ENCODE measurements at regions of chr20 and their contacts with region 1.

Region 1: GRCh38 chr20:53915446-53916172 is 154.8 kb downstream of the BCAS1 start:
- DNase-seq: peak; percentile 84
- ATAC-seq: peak; percentile 92
- H3K4me3 ChIP-seq: peak overlapping the region; percentile 73 to 88 (median 80)
- H3K27ac ChIP-seq: peak overlapping the region; percentile 17
- H3K4me1 ChIP-seq: peaks cover 48% of the 10 kb centered on the region
- H3K27me3 ChIP-seq: peaks cover 0 to 2% of the 10 kb centered on the region in 2 experiments; a peak in 1 of 5 replicates
- CTCF ChIP-seq: peak; percentile 96
- EP300 ChIP-seq: no peak; a peak in 1 of 4 replicates
- POLR2A ChIP-seq: no peak
- RAD21 ChIP-seq: peak; percentile 83

Region 2: DNA sequence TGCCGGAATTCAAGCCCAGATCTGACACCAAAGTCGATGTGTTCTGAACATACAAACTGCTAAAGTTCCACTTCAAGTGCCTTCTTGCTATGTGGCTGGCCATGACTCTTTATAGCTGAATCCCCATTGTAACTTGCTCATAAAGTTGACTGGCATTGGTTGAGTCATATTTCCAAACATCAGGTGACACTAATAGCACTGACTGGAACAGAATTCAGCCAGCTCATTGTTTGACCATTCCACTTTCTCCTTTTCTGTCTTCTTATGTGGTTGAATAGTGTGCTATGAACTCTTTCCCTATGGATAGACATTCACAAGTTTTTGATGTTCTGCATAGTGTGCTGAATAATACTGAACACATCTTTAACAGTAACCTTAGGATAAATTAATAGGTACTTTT is 1457.8 kb before region 1 on chr20:
- CTCF ChIA-PET with region 1: no interaction called
- POLR2A ChIA-PET with region 1: no interaction called
- in situ Hi-C with region 1: no loop called
- intact Hi-C with region 1: no loop called
- DNase-seq: no peak
- ATAC-seq: no peak
- H3K4me3 ChIP-seq: no peak overlapping the region
- H3K27ac ChIP-seq: no peak overlapping the region
- H3K4me1 ChIP-seq: no peaks in the 10 kb centered on the region
- H3K27me3 ChIP-seq: no peaks in the 10 kb centered on the region
- CTCF ChIP-seq: no peak
- EP300 ChIP-seq: no peak
- POLR2A ChIP-seq: no peak
- RAD21 ChIP-seq: no peak

Region 3: GRCh38 chr20:53594068-53595017 is 321.3 kb before region 1 on chr20:
- CTCF ChIA-PET with region 1: no interaction called
- POLR2A ChIA-PET with region 1: interaction called, 13 read pairs
- in situ Hi-C with region 1: no loop called
- intact Hi-C with region 1: no loop called
- DNase-seq: peak; percentile 89
- ATAC-seq: peak; percentile 88
- H3K4me3 ChIP-seq: peak overlapping the region; percentile 89 to 98 (median 90)
- H3K27ac ChIP-seq: peak overlapping the region; percentile 87
- H3K4me1 ChIP-seq: peaks cover 43% of the 10 kb centered on the region
- H3K27me3 ChIP-seq: no peaks in the 10 kb centered on the region; a peak in 1 of 5 replicates
- CTCF ChIP-seq: peak; percentile 88
- EP300 ChIP-seq: peak in 1 of 2 experiments; percentile 14; a peak in 1 of 4 replicates
- POLR2A ChIP-seq: peak; percentile 52 to 60
- RAD21 ChIP-seq: peak; percentile 91

Region 4: GRCh38 chr20:53660078-53660909 is 255.3 kb before region 1 on chr20:
- CTCF ChIA-PET with region 1: no interaction called
- POLR2A ChIA-PET with region 1: interaction called, 5 read pairs
- in situ Hi-C with region 1: no loop called
- intact Hi-C with region 1: loop called (anchors 5 kb)
- DNase-seq: no peak
- ATAC-seq: no peak
- H3K4me3 ChIP-seq: peak overlapping the region in 2 of 3 experiments; percentile 6 to 7; a peak in 2 of 6 replicates
- H3K27ac ChIP-seq: peak overlapping the region; percentile 9
- H3K4me1 ChIP-seq: peaks cover 55% of the 10 kb centered on the region
- H3K27me3 ChIP-seq: no peaks in the 10 kb centered on the region
- CTCF ChIP-seq: no peak
- EP300 ChIP-seq: no peak
- POLR2A ChIP-seq: no peak
- RAD21 ChIP-seq: no peak

Region 5: GRCh38 chr20:53711394-53712211 is 204.0 kb before region 1 on chr20:
- CTCF ChIA-PET with region 1: no interaction called
- POLR2A ChIA-PET with region 1: no interaction called
- in situ Hi-C with region 1: no loop called
- intact Hi-C with region 1: loop called (anchors 5 kb)
- DNase-seq: peak; percentile 69
- ATAC-seq: peak; percentile 76
- H3K4me3 ChIP-seq: peak overlapping the region; percentile 35 to 49 (median 42); a peak in 5 of 6 replicates
- H3K27ac ChIP-seq: peak overlapping the region; percentile 30
- H3K4me1 ChIP-seq: peaks cover 58% of the 10 kb centered on the region
- H3K27me3 ChIP-seq: no peaks in the 10 kb centered on the region
- CTCF ChIP-seq: no peak
- EP300 ChIP-seq: peak in 1 of 2 experiments; percentile 66; a peak in 3 of 4 replicates
- POLR2A ChIP-seq: peak in 1 of 2 experiments; percentile 58; a peak in 1 of 4 replicates
- RAD21 ChIP-seq: no peak

Region 6: GRCh38 chr20:53786445-53787267 is 129.0 kb before region 1 on chr20:
- CTCF ChIA-PET with region 1: no interaction called
- POLR2A ChIA-PET with region 1: no interaction called
- in situ Hi-C with region 1: no loop called
- intact Hi-C with region 1: loop called (anchors 5 kb)
- DNase-seq: peak; percentile 56
- ATAC-seq: peak; percentile 77
- H3K4me3 ChIP-seq: peak overlapping the region; percentile 26 to 52 (median 27)
- H3K27ac ChIP-seq: peak overlapping the region; percentile 72
- H3K4me1 ChIP-seq: peaks cover 65% of the 10 kb centered on the region
- H3K27me3 ChIP-seq: no peaks in the 10 kb centered on the region
- CTCF ChIP-seq: peak; percentile 46
- EP300 ChIP-seq: peak in 1 of 2 experiments; percentile 82; a peak in 2 of 4 replicates
- POLR2A ChIP-seq: no peak
- RAD21 ChIP-seq: peak; percentile 40

Region 7: DNA sequence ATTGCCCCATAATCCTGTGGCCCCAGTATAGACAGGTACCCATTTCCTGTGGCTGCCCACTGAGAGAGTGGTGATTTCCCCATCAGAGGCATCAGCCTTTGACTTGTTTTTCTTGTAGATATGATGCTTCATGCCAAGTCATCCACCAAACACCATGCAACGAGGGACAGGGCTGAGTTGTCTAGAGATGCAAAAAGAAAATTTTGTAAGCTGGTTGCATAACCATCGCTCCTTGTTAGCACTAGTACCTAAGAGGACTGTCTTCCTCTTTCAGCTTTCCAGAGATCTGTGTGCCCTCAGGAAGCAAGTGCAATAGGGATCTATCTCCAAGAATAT is 12.0 kb before region 1 on chr20:
- CTCF ChIA-PET with region 1: no interaction called
- POLR2A ChIA-PET with region 1: no interaction called
- in situ Hi-C with region 1: no loop called
- intact Hi-C with region 1: no loop called
- DNase-seq: no peak
- ATAC-seq: no peak
- H3K4me3 ChIP-seq: no peak overlapping the region
- H3K27ac ChIP-seq: no peak overlapping the region
- H3K4me1 ChIP-seq: peaks cover 32% of the 10 kb centered on the region
- H3K27me3 ChIP-seq: peaks cover 0 to 10% of the 10 kb centered on the region in 2 experiments; a peak in 2 of 5 replicates
- CTCF ChIP-seq: no peak
- EP300 ChIP-seq: no peak
- POLR2A ChIP-seq: no peak
- RAD21 ChIP-seq: no peak

Measured in HepG2 (cell line).